HAP-1 (cell line): ENCODE measurements at regions of chr5 and their contacts with region 1.

Region 1: GRCh38 chr5:172932313-172933017 is 26.8 kb upstream of the RPL26L1 start:
- DNase-seq: peak; percentile 43 to 77
- H3K4me3 ChIP-seq: no peak overlapping the region
- H3K4me1 ChIP-seq: peaks cover 15% of the 10 kb centered on the region
- H3K27me3 ChIP-seq: no peaks in the 10 kb centered on the region

Region 2: GRCh38 chr5:172714491-172715421 is 217.7 kb before region 1 on chr5:
- in situ Hi-C with region 1: loop called (anchors 5 kb)
- DNase-seq: peak; percentile 57 to 86
- H3K4me3 ChIP-seq: no peak overlapping the region
- H3K4me1 ChIP-seq: no peaks in the 10 kb centered on the region
- H3K27me3 ChIP-seq: peaks cover 7% of the 10 kb centered on the region

Region 3: DNA sequence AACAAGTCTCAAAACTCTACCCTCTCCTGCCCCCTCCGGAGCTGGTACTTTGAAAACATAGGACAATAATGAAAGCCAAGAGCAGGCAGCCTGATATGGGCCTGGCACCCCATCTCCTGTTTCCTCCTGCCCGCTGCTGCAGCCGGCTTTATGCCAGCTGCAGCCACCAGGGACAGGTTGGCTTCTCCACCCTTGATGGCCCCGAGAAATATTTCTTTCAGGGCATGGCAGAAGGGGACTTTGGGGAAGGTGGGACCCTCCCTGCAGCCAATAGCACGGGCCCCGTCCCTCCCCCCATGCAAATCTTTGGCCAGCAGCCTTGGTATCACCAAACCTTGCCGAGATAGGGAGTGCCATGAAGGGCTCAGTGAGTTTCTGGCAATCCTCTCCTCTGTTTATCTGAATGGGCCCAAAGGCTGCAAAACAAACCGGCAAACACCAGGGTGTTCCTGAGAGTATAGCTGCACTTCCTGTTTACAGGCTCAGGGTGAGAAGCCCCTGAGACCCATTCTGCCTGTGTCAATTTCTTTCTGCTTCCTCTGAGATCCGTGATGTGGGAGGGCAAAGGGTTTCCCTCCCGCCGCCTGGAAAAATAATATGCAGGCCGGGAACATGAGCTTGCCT is 757.4 kb after region 1 on chr5:
- in situ Hi-C with region 1: no loop called
- DNase-seq: no peak
- H3K4me3 ChIP-seq: no peak overlapping the region
- H3K4me1 ChIP-seq: no peaks in the 10 kb centered on the region
- H3K27me3 ChIP-seq: no peaks in the 10 kb centered on the region